Gastrocnemius medialis (tissue), 4 donors: ENCODE measurements at regions of chr3 and their contacts with region 1.

Region 1: GRCh38 chr3:51670823-51671733 is at the start of gene TEX264:
- DNase-seq: peak; percentile 87 to 95
- ATAC-seq: peak; percentile 81
- H3K4me3 ChIP-seq: peak within 1 kb of the TSS; percentile 75 to 99 (median 94)
- H3K27ac ChIP-seq: peak within 1 kb of the TSS; percentile 92 to 99 (median 96)
- H3K4me1 ChIP-seq: peaks cover 24 to 40% of the 10 kb centered on the region in 2 donors
- H3K27me3 ChIP-seq: no peaks in the 10 kb centered on the region
- CTCF ChIP-seq: no peak
- POLR2A ChIP-seq: peak; percentile 85 to 87
- total RNA-seq, gene TEX264: 43.9 to 83.5 (median 54.3) TPM

Region 2: GRCh38 chr3:51384726-51385473 is 286.2 kb before region 1 on chr3 and contains the start of gene MANF:
- in situ Hi-C with region 1: loop called in 2 of 4 experiments (anchors 25 kb)
- intact Hi-C with region 1: loop called (anchors 2 kb)
- DNase-seq: peak; percentile 98
- ATAC-seq: peak; percentile 96 to 97
- H3K4me3 ChIP-seq: peak within 1 kb of the TSS; percentile 73 to 96 (median 94)
- H3K27ac ChIP-seq: peak within 1 kb of the TSS; percentile 91 to 98 (median 92)
- H3K4me1 ChIP-seq: peaks cover 25 to 28% of the 10 kb centered on the region in 2 donors
- H3K27me3 ChIP-seq: no peaks in the 10 kb centered on the region
- CTCF ChIP-seq: peak in 3 of 5 experiments; percentile 14 to 24 (median 20)
- POLR2A ChIP-seq: peak; percentile 88 to 95
- total RNA-seq, gene MANF: 4.4 to 19.7 (median 11.5) TPM

Region 3: GRCh38 chr3:51391075-51391567 is 280.0 kb before region 1 on chr3 and contains the start of gene RBM15B:
- in situ Hi-C with region 1: loop called in 2 of 4 experiments (anchors 25 kb)
- intact Hi-C with region 1: no loop called
- DNase-seq: peak; percentile 95 to 97
- ATAC-seq: peak; percentile 81 to 87
- H3K4me3 ChIP-seq: peak within 1 kb of the TSS; percentile 68 to 82 (median 76)
- H3K27ac ChIP-seq: peak within 1 kb of the TSS; percentile 77 to 94 (median 90)
- H3K4me1 ChIP-seq: peaks cover 50 to 60% of the 10 kb centered on the region in 2 donors
- H3K27me3 ChIP-seq: no peaks in the 10 kb centered on the region
- CTCF ChIP-seq: peak in 4 of 5 experiments; percentile 85 to 90 (median 88)
- POLR2A ChIP-seq: peak; percentile 79 to 85
- total RNA-seq, gene RBM15B: 4.9 to 13.7 (median 8.9) TPM

Region 4: DNA sequence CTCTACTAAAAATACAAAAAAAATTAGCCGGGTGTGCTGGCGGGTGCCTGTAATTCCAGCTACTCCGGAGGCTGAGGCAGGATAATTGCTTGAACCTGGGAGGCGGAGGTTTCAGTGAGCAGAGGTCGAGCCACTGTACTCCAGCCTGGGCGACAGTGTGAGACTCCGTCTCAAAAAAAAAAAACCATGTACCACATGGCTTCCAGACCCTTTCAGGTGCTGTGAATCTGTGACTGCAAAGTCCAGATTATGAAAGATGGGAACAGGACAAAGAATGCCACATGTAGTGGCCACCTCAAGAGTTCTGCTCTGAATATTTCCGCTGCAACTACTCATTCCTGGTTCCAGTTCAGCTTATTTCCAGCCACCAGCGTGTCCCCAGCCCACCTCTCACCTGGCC is 162.8 kb before region 1 on chr3:
- in situ Hi-C with region 1: loop called in 3 of 4 experiments (anchors 5 kb)
- intact Hi-C with region 1: no loop called
- DNase-seq: no peak
- ATAC-seq: no peak
- H3K4me3 ChIP-seq: no peak overlapping the region
- H3K27ac ChIP-seq: no peak overlapping the region
- H3K4me1 ChIP-seq: no peaks in the 10 kb centered on the region
- H3K27me3 ChIP-seq: no peaks in the 10 kb centered on the region
- CTCF ChIP-seq: no peak
- POLR2A ChIP-seq: no peak

Region 5: DNA sequence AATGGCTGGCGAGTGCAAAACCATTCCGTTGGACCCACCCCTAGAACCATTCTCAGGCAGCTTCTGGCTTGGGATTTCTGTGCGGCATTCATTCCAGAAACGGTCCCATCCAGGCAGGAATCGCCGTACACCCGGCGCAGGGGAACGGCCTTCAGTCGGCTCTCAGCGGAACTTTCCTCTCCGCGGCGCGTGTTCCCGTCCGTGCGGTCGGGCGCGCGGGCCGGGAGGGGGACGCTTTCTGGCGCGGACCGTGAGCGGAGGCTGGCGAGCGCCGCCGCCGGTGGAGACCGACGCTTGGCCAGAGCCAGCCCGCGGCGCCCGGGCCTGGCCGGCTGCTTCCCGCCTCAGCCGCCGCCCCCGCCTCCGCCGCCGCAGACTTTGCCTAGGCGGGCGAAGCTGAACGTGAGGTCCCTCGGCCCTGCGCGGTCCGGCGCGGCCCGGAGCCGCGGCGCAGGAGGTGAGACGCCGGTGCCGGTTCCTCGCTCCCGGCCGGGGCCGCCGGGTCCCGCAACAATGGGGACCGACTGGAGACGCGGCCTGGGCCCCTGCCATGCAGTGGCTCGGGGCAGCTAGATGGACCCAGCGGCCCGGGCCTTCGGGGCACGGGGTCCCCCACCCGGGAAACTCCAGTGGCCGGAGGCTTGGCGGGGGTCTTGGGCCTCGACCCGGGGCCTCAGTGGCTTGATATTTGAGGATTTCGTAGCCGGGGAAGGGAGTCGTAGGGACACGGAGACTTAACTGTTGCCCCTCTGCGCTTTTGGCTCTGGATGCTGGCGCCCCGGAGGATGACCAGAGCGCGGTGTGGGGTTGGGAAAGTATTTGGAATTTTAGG is 132.4 kb before region 1 on chr3 and contains the start of gene RAD54L2:
- in situ Hi-C with region 1: no loop called
- intact Hi-C with region 1: loop called (anchors 1 kb)
- DNase-seq: peak; percentile 68 to 72
- ATAC-seq: peak; percentile 94 to 95
- H3K4me3 ChIP-seq: peak within 1 kb of the TSS; percentile 82 to 96 (median 88)
- H3K27ac ChIP-seq: peak within 1 kb of the TSS; percentile 85 to 96 (median 93)
- H3K4me1 ChIP-seq: peaks cover 15 to 27% of the 10 kb centered on the region in 2 donors
- H3K27me3 ChIP-seq: no peaks in the 10 kb centered on the region
- CTCF ChIP-seq: peak in 3 of 5 experiments; percentile 9 to 51 (median 33)
- POLR2A ChIP-seq: peak; percentile 42 to 62
- total RNA-seq, gene RAD54L2: 8.8 to 11.2 (median 10.4) TPM

Region 6: DNA sequence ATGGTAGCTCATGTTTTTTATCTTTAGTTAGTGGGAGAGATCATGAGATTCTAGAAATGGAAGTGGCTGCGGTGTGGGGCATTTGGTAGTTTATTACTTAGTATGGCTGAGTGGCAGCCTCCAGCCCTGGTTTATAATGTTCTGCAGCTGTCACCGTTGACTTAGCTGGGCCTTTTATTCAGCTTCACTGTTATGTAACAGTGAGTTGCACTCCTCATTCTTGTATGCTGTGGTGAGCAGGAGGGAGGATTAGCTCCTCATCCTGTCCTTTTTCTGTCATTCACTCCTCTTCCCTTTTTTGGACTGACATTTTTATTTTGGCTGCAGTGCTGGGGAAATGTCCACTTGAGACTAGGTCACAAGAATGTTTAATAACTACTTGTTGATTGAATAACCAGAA is 103.0 kb before region 1 on chr3:
- in situ Hi-C with region 1: no loop called
- intact Hi-C with region 1: no loop called
- DNase-seq: no peak
- ATAC-seq: peak in 1 of 2 donors; percentile 74
- H3K4me3 ChIP-seq: no peak overlapping the region
- H3K27ac ChIP-seq: peak overlapping the region in 1 of 4 donors; percentile 41
- H3K4me1 ChIP-seq: peaks cover 13 to 27% of the 10 kb centered on the region in 2 donors
- H3K27me3 ChIP-seq: no peaks in the 10 kb centered on the region
- CTCF ChIP-seq: no peak
- POLR2A ChIP-seq: no peak